ENCODE measurements at regions of chr15 and their contacts with region 1.

Region 1: GRCh38 chr15:68252925-68253534 is 23.5 kb upstream of the CLN6 start:
- DNase-seq: no peak
- ATAC-seq: peak; percentile 26 to 47
- H3K4me3 ChIP-seq: no peak overlapping the region
- H3K27ac ChIP-seq: no peak overlapping the region
- H3K4me1 ChIP-seq: peaks cover 14% of the 10 kb centered on the region in 2 donors
- H3K27me3 ChIP-seq: no peaks in the 10 kb centered on the region
- CTCF ChIP-seq: peak; percentile 82 to 93 (median 90)
- POLR2A ChIP-seq: no peak

Region 2: DNA sequence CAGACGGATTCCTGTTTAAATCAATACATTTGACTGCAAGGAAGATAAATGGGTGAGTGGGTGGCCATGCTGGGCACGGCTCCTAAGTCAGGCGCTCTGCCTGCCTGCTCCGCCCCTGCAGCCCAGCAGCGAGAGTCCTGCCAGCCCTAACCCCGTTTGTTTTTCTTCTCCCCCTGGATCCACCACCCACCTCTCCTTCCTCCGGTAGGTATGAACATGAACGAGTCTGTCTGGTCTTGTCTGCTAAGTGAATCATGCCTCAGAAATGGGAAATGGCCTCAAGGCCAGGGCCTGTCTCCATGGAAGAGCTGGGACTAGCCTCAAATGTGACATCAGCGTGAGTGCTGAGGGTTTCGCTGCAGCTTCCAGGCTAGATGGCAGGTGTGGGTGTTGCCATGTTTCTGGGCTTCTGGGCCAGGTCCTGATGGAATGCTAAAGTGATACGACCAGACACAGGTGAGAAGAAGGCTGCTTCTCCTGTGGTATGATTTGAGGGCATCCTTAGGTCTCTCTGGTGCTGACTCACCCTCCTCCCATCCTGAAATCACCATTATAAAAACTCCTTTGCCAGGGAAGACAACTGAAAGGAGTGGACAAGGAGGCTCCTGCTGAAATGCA is 18.9 kb after region 1 on chr15:
- in situ Hi-C with region 1: no loop called
- intact Hi-C with region 1: loop called (anchors 1 kb)
- DNase-seq: peak in 1 of 2 donors; percentile 71
- ATAC-seq: peak; percentile 30 to 56
- H3K4me3 ChIP-seq: peak overlapping the region in 1 of 4 donors; percentile 7
- H3K27ac ChIP-seq: peak overlapping the region; percentile 97 to 100 (median 99)
- H3K4me1 ChIP-seq: peaks cover 58 to 62% of the 10 kb centered on the region in 2 donors
- H3K27me3 ChIP-seq: no peaks in the 10 kb centered on the region
- CTCF ChIP-seq: no peak
- POLR2A ChIP-seq: peak; percentile 18 to 64

Region 3: DNA sequence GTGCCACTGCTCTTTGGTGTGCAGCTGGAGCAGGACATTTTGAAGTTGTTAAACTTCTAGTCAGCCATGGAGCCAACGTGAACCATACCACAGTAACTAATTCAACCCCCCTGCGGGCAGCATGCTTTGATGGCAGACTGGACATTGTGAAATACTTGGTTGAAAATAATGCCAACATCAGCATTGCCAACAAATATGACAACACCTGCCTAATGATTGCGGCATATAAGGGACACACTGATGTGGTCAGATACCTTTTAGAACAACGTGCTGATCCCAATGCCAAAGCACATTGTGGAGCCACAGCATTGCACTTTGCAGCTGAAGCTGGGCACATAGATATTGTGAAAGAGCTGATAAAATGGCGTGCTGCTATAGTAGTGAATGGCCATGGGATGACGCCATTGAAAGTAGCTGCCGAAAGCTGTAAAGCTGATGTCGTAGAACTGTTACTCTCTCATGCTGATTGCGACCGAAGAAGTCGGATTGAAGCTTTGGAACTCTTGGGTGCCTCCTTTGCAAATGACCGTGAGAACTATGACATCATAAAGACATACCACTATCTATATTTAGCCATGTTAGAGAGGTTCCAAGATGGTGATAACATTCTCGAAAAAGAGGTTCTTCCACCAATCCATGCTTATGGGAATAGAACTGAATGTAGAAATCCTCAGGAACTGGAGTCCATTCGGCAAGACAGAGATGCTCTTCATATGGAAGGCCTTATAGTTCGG is 36.8 kb after region 1 on chr15:
- in situ Hi-C with region 1: no loop called
- intact Hi-C with region 1: loop called (anchors 2 kb)
- DNase-seq: peak; percentile 77 to 87
- ATAC-seq: peak; percentile 91 to 94
- H3K4me3 ChIP-seq: no peak overlapping the region
- H3K27ac ChIP-seq: peak overlapping the region; percentile 97 to 100 (median 99)
- H3K4me1 ChIP-seq: peaks cover 88 to 96% of the 10 kb centered on the region in 2 donors
- H3K27me3 ChIP-seq: no peaks in the 10 kb centered on the region
- CTCF ChIP-seq: no peak
- POLR2A ChIP-seq: peak in 1 of 2 donors; percentile 55

Region 4: GRCh38 chr15:68304589-68305337 is 51.7 kb after region 1 on chr15:
- in situ Hi-C with region 1: loop called in 3 of 4 experiments (anchors 5 to 10 kb)
- intact Hi-C with region 1: loop called (anchors 1 kb)
- DNase-seq: no peak
- ATAC-seq: no peak
- H3K4me3 ChIP-seq: no peak overlapping the region
- H3K27ac ChIP-seq: no peak overlapping the region
- H3K4me1 ChIP-seq: peaks cover 6 to 8% of the 10 kb centered on the region in 2 donors
- H3K27me3 ChIP-seq: no peaks in the 10 kb centered on the region
- CTCF ChIP-seq: no peak
- POLR2A ChIP-seq: no peak

Region 5: DNA sequence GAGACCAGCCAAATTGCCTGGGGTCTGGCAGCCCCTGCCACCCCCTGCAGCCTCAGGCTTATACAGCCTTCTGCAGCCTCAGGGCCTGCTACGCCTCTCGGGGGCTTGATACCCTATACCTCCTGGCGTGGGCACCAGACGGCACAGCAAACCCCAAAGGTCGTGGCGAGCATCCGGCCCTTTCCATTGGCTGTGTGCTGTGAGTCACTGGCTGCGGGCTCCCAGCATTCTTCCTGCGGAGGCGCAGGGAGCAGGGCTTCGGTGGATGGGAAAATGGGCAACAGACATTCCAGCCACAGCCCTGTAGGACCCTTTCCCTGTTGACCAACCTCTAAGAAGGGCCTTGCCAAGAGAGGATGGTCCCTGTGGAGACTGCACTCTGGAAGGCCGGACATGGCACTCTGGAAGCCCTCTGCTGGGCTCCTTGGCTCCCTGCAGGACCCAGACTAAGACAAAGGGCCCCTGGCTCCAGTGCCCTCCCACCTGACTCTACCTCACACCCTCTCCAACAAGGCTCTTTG is 119.3 kb after region 1 on chr15:
- in situ Hi-C with region 1: loop called in 3 of 4 experiments (anchors 5 to 10 kb)
- intact Hi-C with region 1: no loop called
- DNase-seq: no peak
- ATAC-seq: peak in 1 of 2 donors; percentile 37
- H3K4me3 ChIP-seq: no peak overlapping the region
- H3K27ac ChIP-seq: no peak overlapping the region
- H3K4me1 ChIP-seq: peaks cover 15 to 16% of the 10 kb centered on the region in 2 donors
- H3K27me3 ChIP-seq: no peaks in the 10 kb centered on the region
- CTCF ChIP-seq: peak; percentile 22 to 57 (median 39)
- POLR2A ChIP-seq: no peak

Region 6: GRCh38 chr15:68383161-68384074 is 130.4 kb after region 1 on chr15:
- in situ Hi-C with region 1: loop called (anchors 5 to 10 kb)
- intact Hi-C with region 1: loop called (anchors 2 kb)
- DNase-seq: no peak
- ATAC-seq: peak; percentile 51 to 70
- H3K4me3 ChIP-seq: no peak overlapping the region
- H3K27ac ChIP-seq: no peak overlapping the region
- H3K4me1 ChIP-seq: no peaks in the 10 kb centered on the region
- H3K27me3 ChIP-seq: peaks cover 0 to 2% (median 0%) of the 10 kb centered on the region in 3 donors
- CTCF ChIP-seq: peak; percentile 68 to 77 (median 76)
- POLR2A ChIP-seq: no peak